ENCODE measurements at regions of chr18 and their contacts with region 1.

Region 1: DNA sequence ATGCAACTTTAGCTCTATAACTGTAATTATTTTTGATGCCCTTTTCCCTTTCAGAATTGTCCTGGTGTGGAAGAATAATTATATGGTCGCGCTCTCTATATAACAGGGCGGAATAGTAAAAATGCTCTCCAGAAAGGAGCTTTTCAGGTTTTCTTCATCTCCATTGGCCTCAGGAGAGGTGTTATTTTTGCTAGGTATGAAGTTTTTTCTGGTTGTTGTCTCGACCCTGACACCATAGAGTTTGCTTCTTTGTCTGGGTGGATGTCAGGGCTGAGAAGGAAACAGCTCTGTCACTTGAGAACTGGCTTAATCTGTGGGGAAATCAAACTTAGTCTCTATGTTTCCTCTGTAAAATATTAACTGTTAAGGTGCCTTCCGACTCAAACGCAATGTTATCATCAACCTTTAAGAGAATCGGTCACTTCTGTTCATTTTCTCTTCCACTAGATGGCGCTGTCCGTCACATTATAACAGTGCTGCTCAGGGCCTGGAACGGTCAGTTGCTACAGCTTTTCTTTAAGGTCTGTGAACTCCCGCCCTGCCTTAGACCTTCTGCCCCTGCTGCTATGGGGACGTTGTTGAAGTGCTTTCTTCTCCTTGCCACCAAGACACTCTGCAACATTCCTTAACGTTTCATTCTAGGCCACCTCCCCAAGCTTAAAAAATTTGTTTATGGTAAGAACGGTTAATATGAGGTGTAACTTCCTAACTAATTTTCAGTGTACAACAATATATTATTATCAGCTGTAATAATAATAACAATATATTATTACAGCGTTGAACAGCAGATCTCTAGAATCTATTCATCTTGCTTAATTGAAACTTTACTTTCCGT is 23.8 kb upstream of the SERPINB12 start:
- DNase-seq: peak; percentile 89
- H3K4me3 Mint-ChIP-seq: no peak overlapping the region
- H3K27ac Mint-ChIP-seq: no peak overlapping the region
- H3K4me1 Mint-ChIP-seq: peaks cover 12% of the 10 kb centered on the region
- H3K27me3 Mint-ChIP-seq: no peaks in the 10 kb centered on the region
- CTCF ChIP-seq: peak; percentile 55

Region 2: GRCh38 chr18:63528863-63529492 is 10.6 kb after region 1 on chr18:
- CTCF ChIA-PET with region 1: interaction called, 38 read pairs
- POLR2A ChIA-PET with region 1: interaction called, 3 read pairs
- intact Hi-C with region 1: no loop called
- DNase-seq: no peak
- H3K4me3 Mint-ChIP-seq: no peak overlapping the region
- H3K27ac Mint-ChIP-seq: no peak overlapping the region
- H3K4me1 Mint-ChIP-seq: no peaks in the 10 kb centered on the region
- H3K27me3 Mint-ChIP-seq: no peaks in the 10 kb centered on the region
- CTCF ChIP-seq: no peak

Region 3: GRCh38 chr18:63562284-63562683 is 43.9 kb after region 1 on chr18:
- CTCF ChIA-PET with region 1: interaction called, 33 read pairs
- POLR2A ChIA-PET with region 1: no interaction called
- intact Hi-C with region 1: no loop called
- DNase-seq: no peak
- H3K4me3 Mint-ChIP-seq: no peak overlapping the region
- H3K27ac Mint-ChIP-seq: no peak overlapping the region
- H3K4me1 Mint-ChIP-seq: no peaks in the 10 kb centered on the region
- H3K27me3 Mint-ChIP-seq: peaks cover 8% of the 10 kb centered on the region
- CTCF ChIP-seq: no peak

Region 4: GRCh38 chr18:63676526-63676925 is 158.1 kb after region 1 on chr18:
- CTCF ChIA-PET with region 1: interaction called, 21 read pairs
- POLR2A ChIA-PET with region 1: interaction called, 4 read pairs
- intact Hi-C with region 1: loop called (anchors 1 kb)
- DNase-seq: peak; percentile 50
- H3K4me3 Mint-ChIP-seq: no peak overlapping the region
- H3K27ac Mint-ChIP-seq: no peak overlapping the region
- H3K4me1 Mint-ChIP-seq: peaks cover 13% of the 10 kb centered on the region
- H3K27me3 Mint-ChIP-seq: no peaks in the 10 kb centered on the region
- CTCF ChIP-seq: peak; percentile 37

Region 5: GRCh38 chr18:63741769-63742168 is 223.4 kb after region 1 on chr18:
- CTCF ChIA-PET with region 1: interaction called, 350 read pairs
- POLR2A ChIA-PET with region 1: interaction called, 6 read pairs
- intact Hi-C with region 1: loop called (anchors 1 kb)
- DNase-seq: peak; percentile 65
- H3K4me3 Mint-ChIP-seq: no peak overlapping the region
- H3K27ac Mint-ChIP-seq: no peak overlapping the region
- H3K4me1 Mint-ChIP-seq: peaks cover 5% of the 10 kb centered on the region
- H3K27me3 Mint-ChIP-seq: no peaks in the 10 kb centered on the region
- CTCF ChIP-seq: peak; percentile 64

Region 6: DNA sequence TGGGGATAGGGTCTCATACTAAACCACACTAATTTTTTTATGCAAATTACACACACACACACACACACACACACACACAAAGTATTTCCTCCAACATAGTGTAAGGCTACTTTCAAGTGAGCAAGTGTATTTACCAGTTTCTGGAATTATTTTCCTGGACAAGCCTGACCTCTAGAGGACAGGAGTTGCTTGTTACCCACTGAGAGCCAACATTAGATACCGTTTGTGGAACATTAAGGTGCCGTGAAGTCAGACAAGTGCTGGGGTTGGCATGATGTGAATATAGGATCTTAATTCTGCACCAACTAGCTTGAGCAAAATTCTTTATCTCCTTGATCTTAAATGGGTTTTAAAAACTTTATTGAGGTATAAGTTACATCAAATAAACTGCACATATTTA is 329.8 kb after region 1 on chr18:
- CTCF ChIA-PET with region 1: interaction called, 317 read pairs
- POLR2A ChIA-PET with region 1: interaction called, 5 read pairs
- intact Hi-C with region 1: loop called (anchors 1 kb)
- DNase-seq: peak; percentile 73
- H3K4me3 Mint-ChIP-seq: no peak overlapping the region
- H3K27ac Mint-ChIP-seq: no peak overlapping the region
- H3K4me1 Mint-ChIP-seq: no peaks in the 10 kb centered on the region
- H3K27me3 Mint-ChIP-seq: no peaks in the 10 kb centered on the region
- CTCF ChIP-seq: peak; percentile 64

Region 7: DNA sequence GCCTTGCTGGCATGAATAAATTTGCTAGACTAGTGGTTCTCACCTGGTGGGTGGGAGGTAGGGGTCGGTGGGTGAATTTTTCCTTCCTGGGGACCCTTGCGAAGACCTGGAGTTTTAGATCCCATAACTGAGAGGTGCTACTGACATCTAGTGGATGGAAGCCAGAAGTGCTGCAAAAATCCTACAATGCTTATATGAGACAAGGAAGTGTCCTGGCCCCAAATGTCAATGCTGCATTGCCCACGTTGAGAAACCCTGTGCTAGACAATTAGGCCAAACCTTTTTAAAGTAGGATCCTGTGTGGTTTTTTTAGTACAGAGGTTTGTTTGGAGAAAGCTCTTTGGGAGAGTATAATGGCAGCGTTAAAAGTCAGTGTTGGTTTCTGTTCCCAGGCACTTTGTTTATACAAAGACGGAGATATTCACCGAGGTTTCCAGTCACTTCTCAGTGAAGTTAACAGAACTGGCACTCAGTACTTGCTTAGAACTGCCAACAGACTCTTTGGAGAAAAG is 461.1 kb after region 1 on chr18:
- CTCF ChIA-PET with region 1: interaction called, 10 read pairs
- POLR2A ChIA-PET with region 1: no interaction called
- intact Hi-C with region 1: no loop called
- DNase-seq: peak; percentile 62
- H3K4me3 Mint-ChIP-seq: peak overlapping the region; percentile 19
- H3K27ac Mint-ChIP-seq: peak overlapping the region; percentile 46
- H3K4me1 Mint-ChIP-seq: peaks cover 19% of the 10 kb centered on the region
- H3K27me3 Mint-ChIP-seq: no peaks in the 10 kb centered on the region
- CTCF ChIP-seq: peak; percentile 74

Region 8: GRCh38 chr18:64377446-64377845 is 859.1 kb after region 1 on chr18:
- CTCF ChIA-PET with region 1: no interaction called
- POLR2A ChIA-PET with region 1: no interaction called
- intact Hi-C with region 1: no loop called
- DNase-seq: no peak
- H3K4me3 Mint-ChIP-seq: no peak overlapping the region
- H3K27ac Mint-ChIP-seq: no peak overlapping the region
- H3K4me1 Mint-ChIP-seq: no peaks in the 10 kb centered on the region
- H3K27me3 Mint-ChIP-seq: peaks cover 65% of the 10 kb centered on the region
- CTCF ChIP-seq: no peak